ENCODE measurements at regions of chr2 and their contacts with region 1.

Region 1: GRCh38 chr2:230614913-230615332 is 97.7 kb upstream of the CAB39 start:
- DNase-seq: no peak
- H3K4me3 ChIP-seq: no peak overlapping the region
- H3K27ac ChIP-seq: no peak overlapping the region
- H3K4me1 ChIP-seq: peaks cover 28% of the 10 kb centered on the region
- H3K27me3 ChIP-seq: no peaks in the 10 kb centered on the region
- CTCF ChIP-seq: no peak

Region 2: DNA sequence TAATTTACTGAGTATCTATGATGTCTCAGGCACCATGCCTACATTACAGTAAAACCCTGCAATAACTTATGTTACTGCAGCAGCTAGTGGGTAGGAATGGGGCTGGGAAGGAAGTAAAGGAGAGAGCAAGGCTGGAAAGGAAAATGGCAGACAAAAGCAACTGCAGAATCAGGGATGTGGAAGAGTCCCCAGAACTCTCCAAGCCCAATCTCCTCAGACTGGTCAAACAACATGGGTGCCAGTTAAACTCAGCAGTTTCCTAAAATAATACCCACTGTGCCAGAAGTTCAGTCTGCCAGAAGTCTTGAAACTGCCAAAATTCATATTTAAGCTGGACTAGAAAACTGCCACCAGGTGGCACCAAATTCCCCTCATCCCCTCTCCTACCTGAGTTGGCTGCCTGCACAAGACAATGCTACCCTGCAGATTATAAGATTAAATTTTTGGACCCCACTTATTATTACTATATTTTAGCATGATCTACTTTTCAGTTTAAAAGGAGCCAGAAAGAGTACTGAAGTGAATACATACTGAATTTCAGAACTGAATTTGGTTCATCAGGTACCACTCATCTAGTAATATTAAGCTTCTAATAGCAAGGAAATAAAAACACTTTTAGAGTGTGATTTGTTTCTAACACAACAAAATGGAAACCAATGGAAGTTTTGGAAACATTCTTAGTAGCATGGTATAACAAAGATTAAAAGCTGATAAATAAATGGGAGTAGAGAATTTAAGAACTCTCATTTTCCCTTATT is 813.7 kb before region 1 on chr2:
- CTCF ChIA-PET with region 1: no interaction called
- POLR2A ChIA-PET with region 1: no interaction called
- intact Hi-C with region 1: loop called (anchors 1 kb)
- DNase-seq: peak; percentile 35 to 37
- H3K4me3 ChIP-seq: no peak overlapping the region
- H3K27ac ChIP-seq: no peak overlapping the region
- H3K4me1 ChIP-seq: no peaks in the 10 kb centered on the region
- H3K27me3 ChIP-seq: no peaks in the 10 kb centered on the region
- CTCF ChIP-seq: peak; percentile 79

Region 3: DNA sequence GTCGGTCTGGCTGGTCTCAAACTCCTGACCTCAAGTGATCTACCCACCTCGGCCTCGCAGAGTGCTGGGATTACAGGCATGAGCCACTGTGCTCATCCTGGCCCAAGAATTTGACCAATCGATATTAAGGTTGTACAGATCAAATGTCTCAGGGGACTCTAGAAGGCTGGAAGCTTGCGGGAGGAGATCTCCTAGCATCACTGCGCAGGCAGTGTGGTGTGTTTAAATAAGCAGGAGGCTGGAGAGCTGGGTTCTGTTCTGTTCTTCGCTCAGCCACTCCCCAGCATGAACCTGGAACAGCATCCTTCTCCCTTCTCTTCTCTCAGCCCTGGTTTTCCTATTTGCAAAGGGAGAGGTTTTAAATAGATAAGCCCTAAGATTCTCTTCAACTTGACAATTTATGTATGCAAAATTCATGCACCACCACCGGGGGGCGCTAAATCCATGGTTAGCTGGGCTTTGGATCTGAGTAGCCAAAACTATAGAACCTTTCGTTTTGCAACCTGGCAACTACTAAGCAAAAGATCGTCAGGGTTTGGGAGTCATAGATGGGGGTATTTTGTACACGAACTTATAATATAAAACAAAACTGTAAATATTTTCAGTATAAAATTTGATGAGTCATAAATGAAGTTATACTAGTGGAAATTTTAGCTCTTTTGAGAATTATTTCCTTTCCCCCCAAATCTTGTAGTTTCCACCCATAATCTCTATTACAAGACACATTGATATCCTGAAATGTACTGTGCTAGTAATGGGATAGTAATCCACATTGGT is 606.8 kb before region 1 on chr2:
- CTCF ChIA-PET with region 1: no interaction called
- POLR2A ChIA-PET with region 1: no interaction called
- intact Hi-C with region 1: loop called (anchors 1 kb)
- DNase-seq: peak; percentile 42 to 71
- H3K4me3 ChIP-seq: no peak overlapping the region
- H3K27ac ChIP-seq: no peak overlapping the region
- H3K4me1 ChIP-seq: peaks cover 7% of the 10 kb centered on the region
- H3K27me3 ChIP-seq: no peaks in the 10 kb centered on the region
- CTCF ChIP-seq: peak; percentile 94

Region 4: DNA sequence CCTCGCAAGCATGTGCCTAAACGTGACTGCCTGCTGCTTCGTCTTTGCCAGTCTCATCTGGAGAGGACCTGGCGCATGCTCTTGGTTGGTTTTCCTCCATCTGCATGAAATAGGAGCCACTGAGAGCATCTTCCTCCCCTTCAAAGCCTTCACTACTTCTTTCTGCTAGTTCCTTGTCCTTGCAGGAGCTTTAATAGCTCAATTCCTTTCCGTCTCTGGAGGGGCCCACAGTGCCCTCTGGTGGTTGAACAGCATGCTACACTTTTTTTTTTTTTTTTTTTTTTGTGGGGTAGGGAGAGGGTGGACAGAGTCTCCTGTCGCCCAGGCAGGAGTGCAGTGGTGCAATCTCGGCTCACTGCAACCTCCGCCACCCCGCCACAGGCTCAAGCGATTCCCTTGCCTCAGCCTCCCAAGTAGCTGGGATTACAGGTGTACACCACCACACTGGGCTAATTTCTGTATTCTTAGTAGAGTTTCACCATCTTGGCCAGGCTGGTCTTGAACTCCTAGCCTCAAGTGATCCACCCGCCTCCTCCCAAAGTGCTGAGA is 454.7 kb before region 1 on chr2:
- CTCF ChIA-PET with region 1: no interaction called
- POLR2A ChIA-PET with region 1: no interaction called
- intact Hi-C with region 1: loop called (anchors 1 kb)
- DNase-seq: peak; percentile 48 to 58
- H3K4me3 ChIP-seq: no peak overlapping the region
- H3K27ac ChIP-seq: no peak overlapping the region
- H3K4me1 ChIP-seq: no peaks in the 10 kb centered on the region
- H3K27me3 ChIP-seq: no peaks in the 10 kb centered on the region
- CTCF ChIP-seq: peak; percentile 84

Region 5: GRCh38 chr2:230650585-230651137 is 35.7 kb after region 1 on chr2:
- CTCF ChIA-PET with region 1: no interaction called
- POLR2A ChIA-PET with region 1: no interaction called
- intact Hi-C with region 1: loop called (anchors 1 kb)
- DNase-seq: peak; percentile 56 to 71
- H3K4me3 ChIP-seq: no peak overlapping the region
- H3K27ac ChIP-seq: no peak overlapping the region
- H3K4me1 ChIP-seq: peaks cover 15% of the 10 kb centered on the region
- H3K27me3 ChIP-seq: no peaks in the 10 kb centered on the region
- CTCF ChIP-seq: no peak

Region 6: GRCh38 chr2:230691005-230691647 is 76.2 kb after region 1 on chr2:
- CTCF ChIA-PET with region 1: no interaction called
- POLR2A ChIA-PET with region 1: no interaction called
- intact Hi-C with region 1: loop called (anchors 1 kb)
- DNase-seq: peak; percentile 83 to 99
- H3K4me3 ChIP-seq: no peak overlapping the region
- H3K27ac ChIP-seq: peak overlapping the region; percentile 84
- H3K4me1 ChIP-seq: peaks cover 97% of the 10 kb centered on the region
- H3K27me3 ChIP-seq: no peaks in the 10 kb centered on the region
- CTCF ChIP-seq: no peak

Region 7: DNA sequence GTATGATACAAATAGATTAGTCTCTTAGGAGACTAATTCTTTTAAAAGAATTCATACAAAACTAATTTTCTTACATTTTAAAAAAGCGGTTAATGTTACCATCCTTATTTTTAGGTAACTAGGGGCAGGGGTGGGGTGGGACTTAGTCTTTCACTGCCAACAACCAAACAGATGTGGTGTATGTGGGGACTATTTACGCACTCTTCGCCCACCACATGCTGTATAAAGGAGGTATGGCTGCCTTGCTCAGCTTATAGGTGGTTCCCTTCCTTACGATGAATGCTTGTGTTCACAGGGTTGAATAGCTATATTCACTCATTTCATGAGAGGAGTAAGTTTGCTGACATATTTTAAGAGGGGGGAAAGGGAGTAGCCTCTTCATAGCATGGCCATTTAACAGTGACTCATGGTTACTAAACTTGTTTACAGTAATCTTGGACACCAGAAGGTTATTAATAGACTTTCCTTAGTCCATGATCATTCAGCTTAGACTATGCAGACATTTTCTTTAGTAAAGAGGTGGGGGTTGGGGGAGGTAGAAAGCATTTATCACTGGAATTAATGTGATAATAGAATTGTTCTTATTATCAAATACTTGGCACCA is 159.5 kb after region 1 on chr2:
- CTCF ChIA-PET with region 1: no interaction called
- POLR2A ChIA-PET with region 1: interaction called, 16 read pairs
- intact Hi-C with region 1: no loop called
- DNase-seq: peak in 1 of 2 experiments; percentile 81
- H3K4me3 ChIP-seq: no peak overlapping the region
- H3K27ac ChIP-seq: peak overlapping the region; percentile 61
- H3K4me1 ChIP-seq: peaks cover 63% of the 10 kb centered on the region
- H3K27me3 ChIP-seq: no peaks in the 10 kb centered on the region
- CTCF ChIP-seq: no peak

Region 8: DNA sequence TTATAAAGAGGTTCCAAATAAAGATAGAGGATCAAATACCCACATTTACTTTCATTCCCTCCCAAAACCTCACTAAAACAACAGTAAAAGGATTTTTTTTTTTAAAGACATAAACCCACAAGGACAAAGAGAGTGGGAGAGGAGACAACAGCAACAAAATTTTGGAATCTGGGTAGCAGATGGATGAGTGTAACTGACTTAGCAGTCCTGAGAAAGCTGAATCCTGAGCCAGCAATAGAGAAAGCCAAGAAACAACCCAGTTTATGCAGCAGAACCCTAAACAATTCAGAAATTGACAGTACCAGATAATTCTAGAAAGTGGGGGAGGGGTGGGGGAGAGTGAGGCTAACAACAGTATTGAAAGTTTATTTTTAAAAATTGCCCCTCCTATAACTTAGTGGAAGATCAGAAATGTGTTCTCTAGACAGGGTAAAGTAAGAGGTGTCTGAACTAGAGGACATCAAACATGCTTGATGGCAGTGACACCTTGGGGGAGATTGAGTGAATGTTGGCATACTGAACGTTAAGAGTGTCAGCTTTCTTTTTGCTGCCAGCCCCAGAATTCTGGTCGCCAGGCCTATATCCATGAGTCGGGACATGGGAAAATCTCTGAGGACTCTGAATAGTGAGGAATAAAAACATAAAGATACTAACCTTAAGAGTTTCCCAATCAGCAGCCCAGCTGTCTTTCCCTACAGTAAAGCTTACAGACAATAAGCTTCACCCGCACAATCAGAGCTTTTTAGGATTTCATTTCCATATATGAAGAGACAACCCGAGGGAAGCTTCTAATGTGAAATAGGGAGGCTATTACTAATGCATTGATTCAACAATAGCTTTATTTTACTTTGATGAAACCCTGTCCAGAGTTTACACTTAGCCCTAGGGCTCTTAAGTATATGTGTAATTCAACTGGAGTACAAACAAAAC is 1635.6 kb after region 1 on chr2:
- CTCF ChIA-PET with region 1: no interaction called
- POLR2A ChIA-PET with region 1: no interaction called
- intact Hi-C with region 1: no loop called
- DNase-seq: no peak
- H3K4me3 ChIP-seq: no peak overlapping the region
- H3K27ac ChIP-seq: no peak overlapping the region
- H3K4me1 ChIP-seq: no peaks in the 10 kb centered on the region
- H3K27me3 ChIP-seq: no peaks in the 10 kb centered on the region
- CTCF ChIP-seq: no peak